GM10248 (cell line): ENCODE measurements at regions of chr2 and their contacts with region 1.

Region 1: GRCh38 chr2:226791487-226792081 is 8.0 kb downstream of the IRS1 start:
- DNase-seq: peak; percentile 99
- CTCF ChIP-seq: no peak

Region 2: DNA sequence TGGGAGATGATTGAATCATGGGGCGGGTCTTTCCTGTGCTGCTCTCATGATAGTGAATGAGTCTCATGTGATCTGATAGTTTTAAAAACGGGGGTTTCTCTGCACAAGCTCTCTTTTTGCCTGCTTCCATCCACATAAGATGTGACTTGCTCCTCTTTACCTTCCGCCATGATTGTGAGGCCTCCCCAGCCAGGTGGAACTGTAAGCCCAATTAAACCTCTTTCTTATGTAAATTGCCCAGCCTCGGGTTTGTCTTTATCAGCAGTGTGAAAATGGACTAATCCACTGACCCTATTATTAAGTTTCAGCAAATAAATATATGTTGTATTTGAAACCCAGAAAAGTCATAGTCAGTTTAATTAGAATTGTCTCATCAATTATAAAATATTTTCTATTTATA is 14.0 kb before region 1 on chr2:
- CTCF ChIA-PET with region 1: interaction called, 13 read pairs
- POLR2A ChIA-PET with region 1: no interaction called
- DNase-seq: no peak
- CTCF ChIP-seq: no peak